Activated CD4-positive, alpha-beta T cell treated with anti-CD3 and anti-CD28 coated beads for 36 hours (primary cell): ENCODE measurements at regions of chr13 and their contacts with region 1.

Region 1: DNA sequence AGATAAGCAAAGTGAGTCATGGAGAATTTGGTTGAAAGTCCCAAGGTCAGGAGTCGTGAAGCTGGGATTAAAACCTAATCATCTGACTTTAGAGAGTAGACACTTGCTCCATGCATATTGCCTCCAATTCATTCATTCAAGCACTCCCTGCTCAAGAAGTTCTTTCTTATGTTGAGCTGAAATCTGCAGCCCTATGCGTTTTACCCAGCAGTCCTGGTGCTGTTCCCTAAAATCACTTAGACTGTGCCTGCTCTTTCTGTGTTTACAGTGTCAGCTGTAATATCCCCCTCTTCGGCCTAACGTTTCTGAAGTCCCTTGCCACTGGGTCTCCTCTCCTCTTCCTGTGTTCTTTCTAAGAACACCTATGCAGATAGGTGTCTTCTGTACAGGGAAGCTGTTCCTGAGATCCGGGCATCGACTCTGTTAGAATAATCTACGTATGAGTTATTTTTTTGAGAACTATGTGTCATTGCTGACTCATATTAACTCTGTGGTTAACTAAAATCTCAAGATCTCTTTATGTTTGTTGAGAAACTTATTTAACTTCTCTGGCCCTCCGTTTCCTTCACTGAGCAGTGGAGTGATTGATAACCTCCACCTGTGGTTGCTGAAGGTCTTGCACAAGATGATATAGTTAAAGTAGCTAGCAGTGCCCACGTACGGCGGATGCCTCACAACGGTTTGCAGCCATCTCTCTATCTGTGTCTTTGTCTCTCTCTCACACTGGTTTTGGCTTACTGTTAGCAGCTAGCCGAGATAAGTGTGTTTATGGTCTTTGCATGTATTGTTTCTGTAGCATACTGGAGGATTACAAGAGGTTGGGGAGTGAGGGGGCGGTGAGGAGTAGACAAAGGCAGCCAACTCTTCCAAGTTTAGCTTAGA is 4.7 kb downstream of the ALOX5AP start:
- DNase-seq: peak; percentile 83
- ATAC-seq: peak; percentile 76
- H3K4me3 Mint-ChIP-seq: peak overlapping the region; percentile 68
- H3K27ac Mint-ChIP-seq: peak overlapping the region; percentile 87
- H3K4me1 Mint-ChIP-seq: peaks cover 81% of the 10 kb centered on the region
- H3K27me3 Mint-ChIP-seq: peaks cover 2% of the 10 kb centered on the region

Region 2: GRCh38 chr13:30142486-30143211 is 597.4 kb before region 1 on chr13:
- CTCF ChIA-PET with region 1: no interaction called
- POLR2A ChIA-PET with region 1: no interaction called
- intact Hi-C with region 1: loop called in 1 of 2 experiments (anchors 2 kb)
- DNase-seq: peak; percentile 66
- ATAC-seq: peak; percentile 49
- H3K4me3 Mint-ChIP-seq: no peak overlapping the region
- H3K27ac Mint-ChIP-seq: peak overlapping the region; percentile 84
- H3K4me1 Mint-ChIP-seq: peaks cover 62% of the 10 kb centered on the region
- H3K27me3 Mint-ChIP-seq: no peaks in the 10 kb centered on the region

Region 3: DNA sequence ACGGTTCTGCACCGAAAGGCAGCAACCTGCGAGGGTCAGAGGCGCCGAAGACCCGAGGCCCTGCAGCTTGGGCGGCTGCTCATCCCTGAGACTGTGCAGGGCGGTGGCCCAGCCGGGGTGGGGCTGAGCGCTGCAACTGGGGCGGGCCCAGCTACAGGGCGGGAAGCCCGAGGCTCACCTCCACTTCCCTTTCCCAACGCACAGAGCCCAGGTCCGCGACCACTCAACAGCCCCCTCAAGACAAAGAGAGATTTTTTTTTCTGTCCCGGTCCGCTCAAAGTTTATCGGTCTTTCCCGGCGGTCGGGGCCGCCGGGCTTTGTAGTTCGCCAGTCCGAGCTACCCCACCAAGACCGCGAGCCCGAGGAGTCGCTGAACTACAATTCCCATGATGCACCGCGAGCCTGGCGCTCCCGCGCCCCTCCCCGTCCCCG is 433.2 kb before region 1 on chr13:
- CTCF ChIA-PET with region 1: no interaction called
- POLR2A ChIA-PET with region 1: no interaction called
- intact Hi-C with region 1: loop called in 1 of 2 experiments (anchors 5 kb)
- DNase-seq: peak; percentile 95
- ATAC-seq: peak; percentile 91
- H3K4me3 Mint-ChIP-seq: peak overlapping the region; percentile 80
- H3K27ac Mint-ChIP-seq: peak overlapping the region; percentile 79
- H3K4me1 Mint-ChIP-seq: peaks cover 31% of the 10 kb centered on the region
- H3K27me3 Mint-ChIP-seq: no peaks in the 10 kb centered on the region

Region 4: DNA sequence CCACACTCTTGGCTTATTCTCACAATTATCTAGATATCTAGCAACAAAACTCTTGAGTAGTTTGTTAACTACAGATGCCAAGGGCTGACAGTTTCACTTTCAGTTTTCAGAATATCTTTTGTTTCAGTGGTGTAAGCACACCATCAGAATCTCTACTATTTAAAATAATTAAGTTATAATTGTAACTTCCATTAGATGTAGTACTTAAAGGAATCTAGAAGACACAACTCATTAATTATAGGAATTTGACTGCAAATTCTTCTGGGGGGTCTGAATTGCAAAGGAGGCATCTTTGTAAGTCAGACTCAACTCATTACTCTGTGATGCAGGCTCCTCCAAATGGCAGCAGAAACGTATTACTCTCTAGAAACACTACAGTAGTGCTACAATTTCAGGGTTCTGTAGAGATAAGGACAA is 167.1 kb before region 1 on chr13:
- CTCF ChIA-PET with region 1: no interaction called
- POLR2A ChIA-PET with region 1: no interaction called
- intact Hi-C with region 1: loop called in 1 of 2 experiments (anchors 1 kb)
- DNase-seq: peak; percentile 27
- ATAC-seq: peak; percentile 54
- H3K4me3 Mint-ChIP-seq: peak overlapping the region; percentile 55
- H3K27ac Mint-ChIP-seq: peak overlapping the region; percentile 72
- H3K4me1 Mint-ChIP-seq: peaks cover 40% of the 10 kb centered on the region
- H3K27me3 Mint-ChIP-seq: no peaks in the 10 kb centered on the region

Region 5: DNA sequence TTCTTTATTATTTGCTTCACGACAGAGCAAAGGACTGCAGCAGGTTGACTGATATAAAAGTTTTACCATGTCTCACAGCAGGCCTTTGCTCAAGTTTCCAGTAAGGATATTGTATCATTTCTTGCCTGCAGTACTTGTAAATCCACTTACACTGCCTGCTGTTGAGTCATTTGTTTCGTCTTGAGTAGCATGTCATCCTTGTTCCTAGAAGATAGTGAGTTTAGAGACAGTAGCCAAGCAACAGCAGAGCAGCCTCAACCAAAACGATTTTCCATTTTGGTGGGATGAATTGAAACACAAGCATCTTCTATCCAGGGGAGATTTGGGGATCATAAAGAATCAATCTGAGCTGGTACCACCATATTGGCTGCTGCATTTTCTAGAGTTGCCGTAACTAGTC is 28.6 kb before region 1 on chr13:
- CTCF ChIA-PET with region 1: interaction called, 3 read pairs
- POLR2A ChIA-PET with region 1: no interaction called
- intact Hi-C with region 1: loop called (anchors 2 kb)
- DNase-seq: no peak
- ATAC-seq: peak; percentile 93
- H3K4me3 Mint-ChIP-seq: no peak overlapping the region
- H3K27ac Mint-ChIP-seq: no peak overlapping the region
- H3K4me1 Mint-ChIP-seq: peaks cover 12% of the 10 kb centered on the region
- H3K27me3 Mint-ChIP-seq: peaks cover 5% of the 10 kb centered on the region

Region 6: DNA sequence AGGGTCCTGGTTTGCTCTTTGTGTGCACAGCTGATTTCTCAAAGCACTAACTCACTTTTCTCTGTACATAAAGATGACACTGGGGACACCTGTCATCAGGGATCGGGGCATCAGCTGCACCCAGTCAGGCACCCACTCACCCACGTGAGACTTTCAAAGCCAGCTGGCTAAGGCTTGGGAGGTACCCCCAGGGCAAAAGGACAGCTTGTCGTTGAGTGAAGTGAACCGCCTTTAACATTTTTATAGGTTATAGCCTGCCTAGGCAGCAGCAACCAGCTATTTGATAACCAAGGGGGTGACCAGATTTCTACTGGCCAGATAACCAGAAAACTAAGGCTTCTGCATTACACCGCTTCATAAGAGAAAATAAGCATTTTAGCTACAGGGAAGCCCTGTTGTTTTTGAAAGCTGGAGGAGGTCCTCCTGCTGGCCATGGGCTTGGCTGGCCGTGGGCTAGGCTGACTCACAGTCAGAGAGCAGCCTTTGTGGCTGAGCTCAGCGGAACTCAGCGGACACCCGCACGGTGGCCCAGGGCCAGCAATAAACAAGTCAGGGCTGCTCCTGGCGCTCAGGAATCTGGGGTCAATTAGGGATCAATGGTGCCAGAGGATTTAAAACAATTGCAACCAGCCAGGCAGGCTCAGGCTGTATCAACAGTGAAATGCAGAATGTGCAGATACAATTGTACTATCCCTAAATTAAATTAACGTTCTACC is 52.4 kb after region 1 on chr13:
- CTCF ChIA-PET with region 1: interaction called, 4 read pairs
- POLR2A ChIA-PET with region 1: interaction called, 3 read pairs
- intact Hi-C with region 1: loop called in 1 of 2 experiments (anchors 2 kb)
- DNase-seq: no peak
- ATAC-seq: no peak
- H3K4me3 Mint-ChIP-seq: no peak overlapping the region
- H3K27ac Mint-ChIP-seq: no peak overlapping the region
- H3K4me1 Mint-ChIP-seq: peaks cover 29% of the 10 kb centered on the region
- H3K27me3 Mint-ChIP-seq: no peaks in the 10 kb centered on the region

Region 7: DNA sequence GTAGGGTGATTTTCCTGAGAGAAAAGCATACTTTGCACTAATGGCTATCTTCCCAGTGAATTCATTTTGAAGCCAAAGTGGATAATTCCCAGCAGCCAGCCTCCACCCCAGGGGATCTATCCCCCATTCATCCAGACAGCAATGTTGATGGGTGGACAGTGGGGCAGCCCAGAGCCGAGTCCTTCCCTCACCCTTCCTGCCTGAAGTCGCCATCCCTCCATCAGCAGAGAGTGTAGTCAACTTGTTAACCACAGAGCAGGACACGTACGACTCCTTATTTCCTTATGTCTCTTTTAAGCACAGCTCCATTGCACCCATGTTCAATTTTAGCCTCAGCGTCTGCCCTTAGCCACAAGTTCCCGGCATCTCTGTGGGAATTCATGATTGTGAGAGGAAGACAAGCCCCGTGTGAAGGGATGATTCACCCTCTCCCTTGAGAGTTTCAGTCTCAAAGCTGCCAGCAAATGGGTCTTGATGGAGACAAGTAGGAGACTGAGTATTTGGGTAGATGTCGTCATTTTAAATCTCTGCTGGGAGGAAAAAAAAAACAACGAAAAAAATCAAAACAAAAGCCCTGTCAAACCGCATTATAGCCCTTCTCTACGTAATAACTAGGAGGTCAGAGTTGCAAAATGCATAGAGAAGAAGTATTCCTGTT is 107.8 kb after region 1 on chr13:
- CTCF ChIA-PET with region 1: no interaction called
- POLR2A ChIA-PET with region 1: no interaction called
- intact Hi-C with region 1: loop called in 1 of 2 experiments (anchors 5 kb)
- DNase-seq: peak; percentile 50
- ATAC-seq: peak; percentile 83
- H3K4me3 Mint-ChIP-seq: no peak overlapping the region
- H3K27ac Mint-ChIP-seq: peak overlapping the region; percentile 41
- H3K4me1 Mint-ChIP-seq: peaks cover 15% of the 10 kb centered on the region
- H3K27me3 Mint-ChIP-seq: peaks cover 5% of the 10 kb centered on the region